ENCODE measurements at regions of chr15 and their contacts with region 1.

Region 1: DNA sequence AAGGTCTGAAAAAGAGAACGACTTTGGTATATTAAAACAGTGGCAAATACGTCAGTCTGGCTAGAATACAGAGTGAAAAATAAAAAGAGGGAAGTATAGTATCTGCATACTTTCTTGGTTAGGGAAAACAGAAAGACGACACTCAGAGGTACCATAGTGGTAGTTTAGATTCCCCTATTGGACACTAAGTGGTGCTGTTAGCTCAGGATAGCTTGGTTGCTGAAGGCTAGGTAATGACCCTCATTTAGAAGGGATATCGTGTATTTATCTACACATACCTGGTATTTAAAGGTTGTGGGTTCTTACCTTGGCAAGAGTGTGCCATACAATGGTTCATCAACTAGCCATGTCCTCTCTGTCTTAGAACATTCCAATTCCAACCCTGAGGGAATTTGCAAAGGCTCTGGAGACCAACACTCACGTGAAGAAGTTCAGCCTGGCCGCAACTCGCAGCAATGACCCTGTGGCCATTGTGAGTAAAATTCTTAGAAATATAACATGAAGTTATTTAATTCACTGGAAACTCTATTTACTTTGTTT is 31.0 kb downstream of the TMOD2 start:
- DNase-seq: peak; percentile 25
- H3K4me3 ChIP-seq: no peak overlapping the region
- H3K27ac ChIP-seq: no peak overlapping the region
- H3K4me1 ChIP-seq: no peaks in the 10 kb centered on the region
- H3K27me3 ChIP-seq: peaks cover 0 to 3% of the 10 kb centered on the region in 2 experiments
- CTCF ChIP-seq: peak; percentile 39 to 45
- POLR2A ChIP-seq: no peak

Region 2: DNA sequence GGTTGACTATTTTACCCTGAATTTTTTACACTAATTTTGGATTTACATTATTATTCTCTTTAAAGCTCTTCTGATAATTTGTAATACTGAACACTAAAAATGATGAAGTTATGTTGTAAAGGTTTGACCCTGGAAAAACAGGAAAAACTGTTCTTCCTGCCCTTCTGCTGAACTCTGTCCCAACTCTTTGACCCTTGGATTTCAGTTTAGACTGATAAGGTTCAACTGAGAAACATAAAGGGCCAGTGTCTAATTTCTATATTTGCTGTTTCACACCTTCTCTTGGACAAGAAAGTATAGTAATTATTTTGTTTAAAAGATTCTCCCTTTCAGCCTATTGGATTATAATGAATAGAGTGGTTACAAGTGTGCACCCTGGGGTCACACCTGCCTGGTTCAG is 34.2 kb after region 1 on chr15:
- CTCF ChIA-PET with region 1: no interaction called
- POLR2A ChIA-PET with region 1: no interaction called
- dilution Hi-C with region 1: no loop called
- intact Hi-C with region 1: no loop called
- DNase-seq: peak; percentile 55
- H3K4me3 ChIP-seq: no peak overlapping the region
- H3K27ac ChIP-seq: no peak overlapping the region
- H3K4me1 ChIP-seq: peaks cover 5% of the 10 kb centered on the region
- H3K27me3 ChIP-seq: no peaks in the 10 kb centered on the region
- CTCF ChIP-seq: no peak
- POLR2A ChIP-seq: no peak

Region 3: DNA sequence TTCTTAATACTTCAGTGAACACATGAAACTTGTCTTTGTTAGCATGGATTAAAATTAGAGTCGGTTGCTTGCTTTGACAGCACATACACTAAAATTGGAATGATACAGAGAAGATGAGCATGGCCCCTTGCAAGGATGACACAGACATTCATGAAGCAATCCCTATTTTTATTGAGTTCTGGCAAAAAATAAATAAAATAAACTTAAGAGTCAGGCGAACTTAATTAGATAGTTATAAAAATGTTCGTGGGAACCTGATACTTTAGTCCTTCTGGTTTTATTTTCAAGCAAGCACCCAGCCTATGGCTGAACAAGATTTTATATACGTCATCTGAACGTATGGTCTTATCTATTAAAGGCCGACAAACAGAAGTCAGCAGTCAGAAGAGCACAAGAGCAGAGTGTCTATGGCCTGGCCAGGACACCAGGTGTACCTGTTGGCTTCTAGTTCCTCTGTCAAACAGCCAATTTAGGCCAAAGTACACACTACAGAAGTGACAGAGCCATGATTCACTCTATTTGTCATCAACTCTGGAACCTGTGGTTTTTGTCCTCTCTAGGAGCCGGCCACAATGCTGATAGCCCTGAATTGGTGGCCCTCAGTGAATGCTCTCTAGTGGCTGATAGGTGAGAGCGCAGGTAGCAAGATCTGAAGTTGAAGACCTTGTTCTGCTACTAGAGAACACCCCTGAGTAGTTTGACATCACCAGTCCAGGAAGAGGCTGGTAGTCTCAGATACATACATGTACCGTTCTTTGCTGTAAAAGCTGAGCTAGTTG is 124.9 kb after region 1 on chr15:
- CTCF ChIA-PET with region 1: interaction called, 26 read pairs
- POLR2A ChIA-PET with region 1: interaction called, 3 read pairs
- dilution Hi-C with region 1: no loop called
- intact Hi-C with region 1: loop called (anchors 1 kb)
- DNase-seq: no peak
- H3K4me3 ChIP-seq: no peak overlapping the region
- H3K27ac ChIP-seq: no peak overlapping the region
- H3K4me1 ChIP-seq: no peaks in the 10 kb centered on the region
- H3K27me3 ChIP-seq: no peaks in the 10 kb centered on the region
- CTCF ChIP-seq: no peak
- POLR2A ChIP-seq: no peak

Region 4: DNA sequence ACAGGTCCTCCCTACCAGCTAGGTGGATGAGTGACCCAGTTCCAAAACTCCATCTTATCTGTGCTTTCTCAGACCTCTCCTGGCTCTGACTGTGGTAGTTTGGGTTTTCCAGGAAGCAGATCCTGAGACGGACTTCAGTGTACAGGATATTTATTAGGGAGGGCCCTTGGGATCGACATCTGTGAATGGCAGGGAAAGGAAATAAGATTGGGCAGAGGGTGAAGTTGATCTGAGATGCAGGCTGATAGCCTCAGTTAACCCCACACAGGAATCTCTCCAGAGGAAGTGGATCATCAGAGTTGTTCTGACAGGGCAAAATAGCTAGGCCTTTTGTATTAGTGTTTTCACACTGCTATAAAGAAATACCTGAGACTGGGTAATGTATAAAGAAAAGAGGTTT is 219.9 kb after region 1 on chr15:
- CTCF ChIA-PET with region 1: no interaction called
- POLR2A ChIA-PET with region 1: no interaction called
- dilution Hi-C with region 1: no loop called
- intact Hi-C with region 1: no loop called
- DNase-seq: peak; percentile 16
- H3K4me3 ChIP-seq: no peak overlapping the region
- H3K27ac ChIP-seq: no peak overlapping the region
- H3K4me1 ChIP-seq: peaks cover 26% of the 10 kb centered on the region
- H3K27me3 ChIP-seq: no peaks in the 10 kb centered on the region
- CTCF ChIP-seq: no peak
- POLR2A ChIP-seq: no peak

Region 5: DNA sequence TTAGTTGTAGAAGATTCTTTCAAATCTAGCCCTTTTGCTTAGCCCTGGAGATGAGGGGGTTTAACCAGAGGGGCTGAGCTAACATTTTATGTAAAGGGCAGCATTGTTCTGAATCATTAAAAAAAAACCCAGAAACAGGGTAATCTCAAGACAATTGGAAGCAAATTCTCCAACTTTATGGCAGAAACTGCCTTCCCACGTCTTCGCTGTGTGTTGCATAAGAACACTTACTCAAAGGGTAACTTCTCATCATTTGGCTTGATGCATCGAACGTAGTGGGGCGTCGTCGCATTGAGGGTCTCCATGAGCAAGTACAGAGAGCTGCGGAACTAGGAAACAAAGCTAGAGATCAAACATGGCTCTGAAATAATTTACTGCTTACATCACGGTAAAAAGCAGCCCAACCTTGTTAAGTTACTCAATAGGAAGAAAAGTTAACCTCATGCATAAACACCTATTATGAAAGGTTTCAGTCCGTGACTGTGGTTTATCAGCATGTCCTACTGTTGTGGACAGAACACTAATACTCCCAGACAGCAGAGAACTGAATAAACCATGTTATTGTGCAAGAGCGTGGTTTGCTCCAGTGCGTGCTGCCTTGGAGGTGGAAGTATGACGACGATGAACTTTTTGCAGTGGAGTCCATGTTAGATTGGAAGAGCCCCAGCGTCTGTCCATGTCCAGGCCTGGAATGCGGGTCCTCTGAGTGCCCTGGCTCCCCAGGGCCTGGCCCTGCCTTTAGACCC is 464.4 kb after region 1 on chr15:
- CTCF ChIA-PET with region 1: no interaction called
- POLR2A ChIA-PET with region 1: no interaction called
- dilution Hi-C with region 1: no loop called
- intact Hi-C with region 1: no loop called
- DNase-seq: no peak
- H3K4me3 ChIP-seq: no peak overlapping the region
- H3K27ac ChIP-seq: no peak overlapping the region
- H3K4me1 ChIP-seq: peaks cover 2% of the 10 kb centered on the region
- H3K27me3 ChIP-seq: no peaks in the 10 kb centered on the region
- CTCF ChIP-seq: no peak
- POLR2A ChIP-seq: no peak

Measured in endothelial cell of umbilical vein (primary cell).